ENCODE measurements at regions of chr18 and their contacts with region 1.

Region 1: GRCh38 chr18:63422087-63422809 is at the start of gene VPS4B:
- DNase-seq: peak; percentile 100
- ATAC-seq: peak; percentile 96
- H3K4me3 Mint-ChIP-seq: peak within 1 kb of the TSS; percentile 96
- H3K27ac Mint-ChIP-seq: peak within 1 kb of the TSS; percentile 99
- H3K4me1 Mint-ChIP-seq: peaks cover 25% of the 10 kb centered on the region
- H3K27me3 Mint-ChIP-seq: no peaks in the 10 kb centered on the region
- CTCF ChIP-seq: no peak
- total RNA-seq, gene VPS4B: 34.8 to 35.9 TPM

Region 2: DNA sequence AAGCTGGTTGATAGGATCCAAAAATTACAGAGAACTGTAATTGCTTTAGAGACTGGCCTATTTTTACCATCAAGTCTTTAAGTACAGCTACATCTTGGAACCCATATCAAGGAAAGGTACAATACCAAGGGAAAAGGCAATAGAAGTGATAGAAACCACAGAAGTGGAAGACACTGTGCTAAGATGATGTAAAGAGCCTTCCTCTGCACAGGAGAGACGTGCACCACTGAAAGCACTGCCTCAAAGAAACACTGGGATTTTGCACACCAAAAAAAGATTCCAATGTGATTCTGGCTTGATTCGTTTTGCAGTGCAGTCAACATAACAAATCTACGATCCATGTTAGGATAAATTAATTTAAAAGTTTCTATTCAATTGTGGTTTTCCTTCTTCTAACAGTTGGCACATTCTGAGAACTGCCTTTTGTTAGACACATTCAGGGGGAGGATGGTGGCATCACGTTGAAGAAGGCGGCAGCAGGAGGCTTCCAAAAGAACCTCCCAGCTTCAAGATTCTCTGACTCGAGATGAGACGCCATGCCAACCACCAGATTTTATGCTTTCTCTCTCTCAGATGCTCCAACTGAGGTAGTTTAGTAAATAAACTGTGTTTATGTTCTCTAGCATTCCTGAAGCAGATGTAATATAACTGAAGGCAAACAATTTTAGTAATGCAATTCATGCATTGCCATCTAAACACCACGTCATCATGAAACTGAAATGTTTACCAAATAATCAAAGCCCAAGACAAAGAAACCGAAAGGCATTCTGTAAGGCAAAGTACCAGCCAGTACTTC is 205.5 kb before region 1 on chr18:
- CTCF ChIA-PET with region 1: no interaction called
- POLR2A ChIA-PET with region 1: no interaction called
- intact Hi-C with region 1: loop called (anchors 10 kb)
- DNase-seq: peak; percentile 65
- ATAC-seq: peak; percentile 31
- H3K4me3 Mint-ChIP-seq: peak overlapping the region; percentile 53
- H3K27ac Mint-ChIP-seq: peak overlapping the region; percentile 92
- H3K4me1 Mint-ChIP-seq: peaks cover 94% of the 10 kb centered on the region
- H3K27me3 Mint-ChIP-seq: no peaks in the 10 kb centered on the region
- CTCF ChIP-seq: no peak

Region 3: GRCh38 chr18:63356272-63356896 is 65.9 kb before region 1 on chr18:
- CTCF ChIA-PET with region 1: no interaction called
- POLR2A ChIA-PET with region 1: no interaction called
- intact Hi-C with region 1: no loop called
- DNase-seq: no peak
- ATAC-seq: no peak
- H3K4me3 Mint-ChIP-seq: no peak overlapping the region
- H3K27ac Mint-ChIP-seq: no peak overlapping the region
- H3K4me1 Mint-ChIP-seq: no peaks in the 10 kb centered on the region
- H3K27me3 Mint-ChIP-seq: no peaks in the 10 kb centered on the region
- CTCF ChIP-seq: no peak

Region 4: GRCh38 chr18:63367053-63367953 is 54.9 kb before region 1 on chr18 and contains the start of gene KDSR:
- CTCF ChIA-PET with region 1: interaction called, 3 read pairs
- POLR2A ChIA-PET with region 1: interaction called, 7 read pairs
- intact Hi-C with region 1: loop called (anchors 5 kb)
- DNase-seq: peak; percentile 86
- ATAC-seq: peak; percentile 84
- H3K4me3 Mint-ChIP-seq: peak within 1 kb of the TSS; percentile 81
- H3K27ac Mint-ChIP-seq: peak within 1 kb of the TSS; percentile 86
- H3K4me1 Mint-ChIP-seq: peaks cover 29% of the 10 kb centered on the region
- H3K27me3 Mint-ChIP-seq: no peaks in the 10 kb centered on the region
- CTCF ChIP-seq: no peak
- total RNA-seq, gene KDSR: 53.4 TPM

Region 5: DNA sequence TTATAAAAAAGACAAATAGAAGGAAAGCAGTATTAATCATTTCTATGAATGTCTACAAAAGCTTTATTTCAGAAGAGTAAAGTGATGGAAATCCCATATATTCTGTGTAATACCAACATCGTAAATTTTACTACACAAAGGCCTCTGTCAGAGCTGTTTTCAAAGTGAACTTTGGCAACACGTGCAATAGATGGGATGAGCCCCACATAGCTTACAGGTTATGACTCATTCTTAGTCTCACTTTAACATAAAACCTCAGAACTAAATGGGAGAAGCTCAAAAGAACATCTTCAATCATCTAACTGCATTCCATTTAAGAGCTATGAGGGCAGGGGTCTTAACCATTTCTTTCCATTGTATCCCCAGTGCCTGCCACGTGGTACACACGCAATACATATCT is 11.5 kb before region 1 on chr18:
- CTCF ChIA-PET with region 1: interaction called, 7 read pairs
- POLR2A ChIA-PET with region 1: interaction called, 17 read pairs
- intact Hi-C with region 1: no loop called
- DNase-seq: no peak
- ATAC-seq: peak; percentile 84
- H3K4me3 Mint-ChIP-seq: no peak overlapping the region
- H3K27ac Mint-ChIP-seq: peak overlapping the region; percentile 84
- H3K4me1 Mint-ChIP-seq: peaks cover 53% of the 10 kb centered on the region
- H3K27me3 Mint-ChIP-seq: no peaks in the 10 kb centered on the region
- CTCF ChIP-seq: no peak

Region 6: DNA sequence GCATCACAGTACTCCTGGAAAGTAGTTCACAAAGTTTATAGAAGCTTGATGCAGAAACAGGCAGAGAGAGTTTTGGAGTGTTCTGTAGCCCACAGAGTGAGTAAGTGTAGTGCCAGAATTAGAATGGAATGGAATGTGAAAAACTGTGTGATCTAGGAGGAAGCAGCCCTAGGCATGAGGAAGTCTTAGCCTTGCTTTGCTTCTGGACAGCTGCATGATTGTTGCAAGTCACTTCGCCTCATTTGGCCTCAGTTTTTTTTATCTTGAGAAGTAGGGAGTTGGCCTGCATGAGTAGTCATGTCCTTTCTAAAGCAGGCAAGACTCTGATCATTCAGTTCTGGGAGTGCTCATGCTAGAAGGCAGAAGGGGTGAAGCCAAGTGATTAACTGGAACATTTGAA is 130.9 kb after region 1 on chr18:
- CTCF ChIA-PET with region 1: no interaction called
- POLR2A ChIA-PET with region 1: no interaction called
- intact Hi-C with region 1: no loop called
- DNase-seq: no peak
- ATAC-seq: no peak
- H3K4me3 Mint-ChIP-seq: no peak overlapping the region
- H3K27ac Mint-ChIP-seq: no peak overlapping the region
- H3K4me1 Mint-ChIP-seq: no peaks in the 10 kb centered on the region
- H3K27me3 Mint-ChIP-seq: peaks cover 13% of the 10 kb centered on the region
- CTCF ChIP-seq: no peak

Region 7: DNA sequence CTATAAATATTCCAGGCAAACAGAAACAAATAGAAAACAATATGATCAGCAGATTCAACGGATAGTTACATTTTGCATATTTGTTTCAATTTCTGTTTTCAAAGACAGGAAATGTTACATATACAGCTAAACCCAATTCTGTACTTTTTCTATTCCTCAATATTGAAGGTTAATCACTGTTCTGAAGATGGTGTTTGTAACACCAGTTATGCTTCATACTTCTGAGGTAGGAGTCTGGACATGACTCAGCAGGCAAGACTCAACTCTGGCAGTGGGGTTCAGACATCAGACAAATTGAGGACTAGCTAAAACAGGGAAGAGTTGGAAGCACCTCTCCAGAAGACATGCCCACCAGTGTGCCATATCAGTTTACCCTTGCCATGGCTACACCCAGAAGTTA is 181.5 kb after region 1 on chr18:
- CTCF ChIA-PET with region 1: no interaction called
- POLR2A ChIA-PET with region 1: no interaction called
- intact Hi-C with region 1: no loop called
- DNase-seq: no peak
- ATAC-seq: no peak
- H3K4me3 Mint-ChIP-seq: no peak overlapping the region
- H3K27ac Mint-ChIP-seq: no peak overlapping the region
- H3K4me1 Mint-ChIP-seq: no peaks in the 10 kb centered on the region
- H3K27me3 Mint-ChIP-seq: peaks cover 6% of the 10 kb centered on the region
- CTCF ChIP-seq: no peak

Region 8: DNA sequence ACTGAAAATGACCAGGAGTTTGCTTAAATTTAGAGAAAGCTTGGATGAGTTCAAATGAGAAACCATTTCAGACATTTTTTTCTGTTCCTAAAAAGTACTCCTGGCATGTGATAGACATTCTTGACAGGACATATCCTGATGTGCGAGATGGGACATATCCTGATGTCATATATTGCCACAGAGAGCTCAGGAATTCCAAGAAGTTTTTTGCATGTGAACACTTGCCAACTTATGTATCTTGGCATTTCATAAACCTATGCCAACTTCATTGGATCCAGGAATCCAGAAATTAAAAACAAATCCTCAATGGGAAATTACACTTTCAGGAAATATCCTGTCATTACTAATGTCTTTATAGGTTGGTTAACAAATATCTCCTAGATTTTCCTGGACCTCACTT is 242.3 kb after region 1 on chr18:
- CTCF ChIA-PET with region 1: no interaction called
- POLR2A ChIA-PET with region 1: no interaction called
- intact Hi-C with region 1: no loop called
- DNase-seq: no peak
- ATAC-seq: no peak
- H3K4me3 Mint-ChIP-seq: no peak overlapping the region
- H3K27ac Mint-ChIP-seq: no peak overlapping the region
- H3K4me1 Mint-ChIP-seq: no peaks in the 10 kb centered on the region
- H3K27me3 Mint-ChIP-seq: no peaks in the 10 kb centered on the region
- CTCF ChIP-seq: no peak